MCF 10A (cell line): ENCODE measurements at regions of chr13 and their contacts with region 1.

Region 1: DNA sequence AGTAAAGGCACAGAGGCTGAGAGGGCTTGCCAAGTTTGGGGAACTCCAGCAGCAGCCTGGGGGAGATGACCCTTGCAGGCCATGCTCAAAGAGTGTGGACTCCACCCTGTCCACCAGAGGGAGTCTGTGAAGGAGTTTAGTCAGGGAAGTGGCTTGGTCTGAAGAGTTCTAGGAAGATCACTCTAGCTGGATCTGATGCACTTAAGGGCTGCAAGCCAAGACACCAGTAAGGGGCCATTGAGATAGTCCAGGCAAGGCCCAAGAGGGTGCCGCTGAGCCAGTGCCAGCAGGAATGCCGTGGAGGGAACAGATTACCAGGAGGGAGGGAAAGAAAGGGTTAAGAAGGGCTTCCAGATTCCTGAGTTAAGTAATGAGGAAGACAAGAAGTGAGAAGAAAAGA is 68.7 kb downstream of the ZAR1L start:
- DNase-seq: peak; percentile 86
- H3K4me3 Mint-ChIP-seq: no peak overlapping the region
- H3K27ac Mint-ChIP-seq: no peak overlapping the region
- H3K4me1 Mint-ChIP-seq: peaks cover 8% of the 10 kb centered on the region
- H3K27me3 Mint-ChIP-seq: no peaks in the 10 kb centered on the region
- CTCF ChIP-seq: peak; percentile 74

Region 2: DNA sequence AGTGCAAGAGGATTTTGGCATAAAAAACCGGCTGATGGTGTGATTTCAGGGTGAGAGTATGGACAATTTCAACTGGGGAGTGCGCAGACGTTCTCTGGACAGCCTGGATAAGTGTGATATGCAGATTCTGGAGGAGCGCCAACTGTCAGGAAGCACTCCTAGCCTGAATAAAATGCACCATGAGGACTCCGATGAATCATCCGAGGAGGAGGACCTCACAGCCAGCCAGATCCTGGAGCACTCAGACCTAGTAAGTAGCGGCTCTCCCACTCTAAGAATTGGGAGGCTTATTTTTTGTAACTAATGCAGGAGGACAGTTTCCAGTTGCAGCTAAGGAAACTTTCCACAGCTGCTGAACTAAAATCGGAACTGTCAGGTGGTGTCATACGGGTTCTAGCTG is 15.1 kb after region 1 on chr13:
- CTCF ChIA-PET with region 1: interaction called, 25 read pairs
- POLR2A ChIA-PET with region 1: interaction called, 6 read pairs
- intact Hi-C with region 1: no loop called
- DNase-seq: peak; percentile 95
- H3K4me3 Mint-ChIP-seq: peak overlapping the region; percentile 5
- H3K27ac Mint-ChIP-seq: peak overlapping the region; percentile 5
- H3K4me1 Mint-ChIP-seq: peaks cover 23% of the 10 kb centered on the region
- H3K27me3 Mint-ChIP-seq: no peaks in the 10 kb centered on the region
- CTCF ChIP-seq: no peak

Region 3: DNA sequence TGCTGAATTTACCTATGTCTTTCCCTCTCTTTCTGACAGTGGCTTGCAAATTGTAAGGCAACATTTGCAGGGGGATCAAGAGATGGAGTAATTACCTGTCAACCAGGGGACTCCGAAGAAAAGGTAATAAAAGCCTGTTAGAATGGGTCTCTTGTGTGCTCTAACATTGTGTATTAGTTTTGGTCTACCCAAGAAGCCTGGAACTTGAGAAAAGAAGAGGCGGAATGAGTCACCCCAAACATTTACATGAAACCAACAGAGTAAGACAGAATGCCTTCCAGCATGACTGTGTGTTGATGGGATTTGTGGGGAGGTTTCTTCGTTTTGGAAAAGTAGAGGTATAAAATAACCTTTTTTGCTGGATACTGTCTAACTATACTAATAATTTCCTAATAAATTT is 32.0 kb after region 1 on chr13:
- CTCF ChIA-PET with region 1: interaction called, 10 read pairs
- POLR2A ChIA-PET with region 1: no interaction called
- intact Hi-C with region 1: no loop called
- DNase-seq: peak; percentile 50
- H3K4me3 Mint-ChIP-seq: no peak overlapping the region
- H3K27ac Mint-ChIP-seq: no peak overlapping the region
- H3K4me1 Mint-ChIP-seq: no peaks in the 10 kb centered on the region
- H3K27me3 Mint-ChIP-seq: no peaks in the 10 kb centered on the region
- CTCF ChIP-seq: no peak

Region 4: GRCh38 chr13:32310134-32310706 is 63.8 kb after region 1 on chr13:
- CTCF ChIA-PET with region 1: interaction called, 21 read pairs
- POLR2A ChIA-PET with region 1: no interaction called
- intact Hi-C with region 1: loop called (anchors 1 kb)
- DNase-seq: peak; percentile 72
- H3K4me3 Mint-ChIP-seq: no peak overlapping the region
- H3K27ac Mint-ChIP-seq: no peak overlapping the region
- H3K4me1 Mint-ChIP-seq: no peaks in the 10 kb centered on the region
- H3K27me3 Mint-ChIP-seq: no peaks in the 10 kb centered on the region
- CTCF ChIP-seq: peak; percentile 54